ENCODE measurements at regions of chr15 and their contacts with region 1.

Region 1: GRCh38 chr15:56996746-56997470 is 78.5 kb downstream of the TCF12 start:
- DNase-seq: no peak
- H3K4me3 Mint-ChIP-seq: no peak overlapping the region
- H3K27ac Mint-ChIP-seq: no peak overlapping the region
- H3K4me1 Mint-ChIP-seq: peaks cover 11% of the 10 kb centered on the region
- H3K27me3 Mint-ChIP-seq: no peaks in the 10 kb centered on the region

Region 2: DNA sequence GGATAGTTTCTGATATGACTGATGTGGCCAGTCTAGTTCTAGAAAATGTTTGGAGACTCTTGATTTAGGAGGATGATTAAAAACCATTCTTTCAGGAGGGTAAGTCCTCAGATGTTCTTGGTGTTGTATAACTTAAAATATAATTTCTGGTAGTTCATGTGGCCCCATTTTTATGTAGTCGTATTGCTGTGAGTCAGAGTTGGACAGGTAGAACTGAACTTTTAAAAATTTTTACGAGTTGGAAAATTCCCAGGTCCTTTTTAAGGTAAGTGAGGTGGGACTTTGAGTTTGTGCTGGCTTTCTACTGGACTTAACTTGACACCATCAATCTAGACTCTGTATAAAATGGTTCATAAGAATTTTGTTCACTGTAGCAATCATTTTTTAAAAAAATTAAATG is 13.8 kb after region 1 on chr15:
- CTCF ChIA-PET with region 1: no interaction called
- intact Hi-C with region 1: loop called (anchors 2 kb)
- DNase-seq: no peak
- H3K4me3 Mint-ChIP-seq: no peak overlapping the region
- H3K27ac Mint-ChIP-seq: no peak overlapping the region
- H3K4me1 Mint-ChIP-seq: peaks cover 40% of the 10 kb centered on the region
- H3K27me3 Mint-ChIP-seq: no peaks in the 10 kb centered on the region

Region 3: DNA sequence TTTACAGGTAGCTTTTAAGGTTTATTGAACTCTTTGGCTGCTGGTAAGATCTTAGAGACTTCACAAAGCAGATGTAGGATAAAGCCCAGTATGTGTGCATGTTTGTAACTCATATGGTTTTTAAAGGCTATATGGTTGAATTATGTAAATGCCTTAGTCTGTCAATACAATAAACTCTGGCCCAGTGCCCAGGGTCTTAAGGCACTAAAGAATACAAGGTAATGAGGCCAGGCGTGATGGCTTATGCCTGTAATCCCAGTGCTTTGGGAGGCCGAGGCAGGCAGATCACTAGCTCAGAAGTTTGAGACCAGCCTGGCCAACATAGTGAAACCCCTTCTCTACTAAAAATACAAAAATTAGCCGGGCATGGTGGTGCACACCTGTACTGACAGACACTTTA is 209.1 kb after region 1 on chr15:
- CTCF ChIA-PET with region 1: no interaction called
- intact Hi-C with region 1: no loop called
- DNase-seq: no peak
- H3K4me3 Mint-ChIP-seq: no peak overlapping the region
- H3K27ac Mint-ChIP-seq: no peak overlapping the region
- H3K4me1 Mint-ChIP-seq: peaks cover 2% of the 10 kb centered on the region
- H3K27me3 Mint-ChIP-seq: no peaks in the 10 kb centered on the region

Measured in activated naive CD4-positive, alpha-beta T cell treated with anti-CD3 and anti-CD28 coated beads for 36 hours (primary cell).